ENCODE measurements at regions of chr12 and their contacts with region 1.

Region 1: GRCh38 chr12:20264608-20265114 is 103.7 kb upstream of the PDE3A start:
- DNase-seq: no peak
- ATAC-seq: no peak
- H3K4me3 ChIP-seq: no peak overlapping the region
- H3K4me3 Mint-ChIP-seq: no peak overlapping the region
- H3K27ac ChIP-seq: no peak overlapping the region
- H3K27ac Mint-ChIP-seq: no peak overlapping the region
- H3K4me1 ChIP-seq: no peaks in the 10 kb centered on the region
- H3K4me1 Mint-ChIP-seq: no peaks in the 10 kb centered on the region
- H3K27me3 ChIP-seq: no peaks in the 10 kb centered on the region
- H3K27me3 Mint-ChIP-seq: no peaks in the 10 kb centered on the region

Region 2: DNA sequence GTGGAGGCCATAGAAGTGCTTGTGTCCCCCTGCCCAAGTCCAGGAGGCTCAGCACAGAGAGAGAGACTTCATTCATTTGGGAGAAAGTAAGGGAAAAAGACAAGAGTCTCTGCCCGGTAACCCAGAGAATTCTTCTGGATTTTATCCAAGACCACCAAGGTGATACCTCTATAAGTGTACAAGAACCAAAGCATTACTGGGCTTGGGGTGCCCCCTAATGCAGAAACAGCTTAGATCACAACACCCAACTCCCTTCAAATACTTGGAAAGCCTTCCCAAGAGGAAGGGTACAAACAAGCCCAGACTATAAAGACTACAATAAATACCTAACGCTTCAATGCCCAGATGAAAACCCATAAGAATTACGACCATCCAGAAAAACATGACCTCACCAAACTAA is 16.0 kb before region 1 on chr12:
- CTCF ChIA-PET with region 1: no interaction called
- POLR2A ChIA-PET with region 1: interaction called in 1 of 2 experiments, 11 read pairs
- DNase-seq: no peak
- ATAC-seq: no peak
- H3K4me3 ChIP-seq: no peak overlapping the region
- H3K4me3 Mint-ChIP-seq: no peak overlapping the region
- H3K27ac ChIP-seq: no peak overlapping the region
- H3K27ac Mint-ChIP-seq: no peak overlapping the region
- H3K4me1 ChIP-seq: no peaks in the 10 kb centered on the region
- H3K4me1 Mint-ChIP-seq: no peaks in the 10 kb centered on the region
- H3K27me3 ChIP-seq: no peaks in the 10 kb centered on the region
- H3K27me3 Mint-ChIP-seq: no peaks in the 10 kb centered on the region

Region 3: DNA sequence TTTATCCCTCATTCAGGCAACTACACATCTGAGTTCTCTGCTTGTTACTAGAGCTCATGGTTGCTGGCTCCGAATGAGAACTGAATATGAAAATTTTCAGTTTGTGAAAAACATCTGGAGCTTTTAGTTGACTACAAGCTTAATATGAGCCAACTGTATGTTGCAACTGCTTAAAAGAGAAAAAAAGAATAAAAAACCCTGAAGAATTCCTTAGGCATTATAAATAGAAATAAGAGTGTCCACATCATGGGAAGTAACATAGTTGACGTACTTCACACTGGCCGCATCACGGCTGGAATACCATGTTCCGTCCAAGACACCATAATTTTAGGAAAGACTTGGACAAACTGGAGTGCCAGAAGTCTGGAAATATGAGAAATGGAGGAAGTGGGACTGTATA is 161.5 kb after region 1 on chr12:
- CTCF ChIA-PET with region 1: no interaction called
- POLR2A ChIA-PET with region 1: no interaction called
- DNase-seq: no peak
- ATAC-seq: no peak
- H3K4me3 ChIP-seq: no peak overlapping the region
- H3K4me3 Mint-ChIP-seq: no peak overlapping the region
- H3K27ac ChIP-seq: no peak overlapping the region
- H3K27ac Mint-ChIP-seq: no peak overlapping the region
- H3K4me1 ChIP-seq: peaks cover 0 to 2% of the 10 kb centered on the region in 2 experiments
- H3K4me1 Mint-ChIP-seq: no peaks in the 10 kb centered on the region
- H3K27me3 ChIP-seq: no peaks in the 10 kb centered on the region
- H3K27me3 Mint-ChIP-seq: no peaks in the 10 kb centered on the region